A673 (cell line): ENCODE measurements at regions of chr3 and their contacts with region 1.

Region 1: GRCh38 chr3:67113802-67114407 is 115.8 kb downstream of the KBTBD8 start:
- DNase-seq: peak; percentile 68
- H3K4me3 ChIP-seq: no peak overlapping the region
- H3K27ac ChIP-seq: no peak overlapping the region
- H3K4me1 ChIP-seq: no peaks in the 10 kb centered on the region
- H3K27me3 ChIP-seq: no peaks in the 10 kb centered on the region
- CTCF ChIP-seq: peak; percentile 70

Region 2: DNA sequence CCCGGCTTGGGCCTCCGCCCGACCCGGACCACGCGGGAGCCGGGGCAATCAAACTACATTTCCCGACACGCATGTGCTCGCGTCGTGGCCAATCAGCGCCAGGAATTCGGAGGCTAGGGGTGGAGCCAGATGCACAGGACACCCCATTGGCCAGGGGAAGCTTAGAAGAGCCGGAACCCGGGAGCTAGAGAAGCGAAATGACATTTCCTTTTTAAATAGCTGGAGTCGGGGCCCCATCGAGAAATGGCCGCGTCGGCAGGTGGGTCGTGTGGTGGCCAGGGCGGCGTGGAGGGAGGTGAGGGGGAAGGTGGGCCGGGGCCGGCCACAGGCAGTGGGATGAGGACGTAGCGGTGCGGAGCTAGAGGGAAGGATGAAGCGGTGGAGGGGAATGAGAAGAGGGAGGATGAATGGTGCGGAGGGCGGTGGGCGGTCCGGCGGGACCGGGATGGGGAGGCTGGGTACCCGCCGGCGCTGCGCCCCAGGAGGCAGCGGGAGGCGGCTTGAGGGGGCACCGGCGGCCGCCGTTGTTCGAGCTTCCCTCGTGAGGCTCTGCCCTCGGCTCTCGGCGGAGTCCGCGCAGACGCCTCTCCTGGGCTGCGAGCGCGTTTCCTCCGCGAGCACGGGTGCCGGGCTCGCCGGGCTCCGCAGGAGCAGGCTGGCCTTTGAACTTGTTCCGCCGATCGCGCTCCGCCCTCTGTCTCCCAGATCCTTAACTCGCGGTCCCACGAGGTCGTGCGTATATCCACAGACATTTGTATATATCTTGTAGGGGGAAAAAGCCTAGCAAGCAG is 115.6 kb before region 1 on chr3 and contains the start of gene KBTBD8:
- CTCF ChIA-PET with region 1: no interaction called
- POLR2A ChIA-PET with region 1: no interaction called
- intact Hi-C with region 1: no loop called
- DNase-seq: peak; percentile 97
- H3K4me3 ChIP-seq: peak within 1 kb of the TSS; percentile 61
- H3K27ac ChIP-seq: no peak within 1 kb of the TSS
- H3K4me1 ChIP-seq: no peaks in the 10 kb centered on the region
- H3K27me3 ChIP-seq: peaks cover 7% of the 10 kb centered on the region
- CTCF ChIP-seq: no peak
- total RNA-seq, gene KBTBD8: 1.7 and 2.0 TPM in 2 replicates

Region 3: DNA sequence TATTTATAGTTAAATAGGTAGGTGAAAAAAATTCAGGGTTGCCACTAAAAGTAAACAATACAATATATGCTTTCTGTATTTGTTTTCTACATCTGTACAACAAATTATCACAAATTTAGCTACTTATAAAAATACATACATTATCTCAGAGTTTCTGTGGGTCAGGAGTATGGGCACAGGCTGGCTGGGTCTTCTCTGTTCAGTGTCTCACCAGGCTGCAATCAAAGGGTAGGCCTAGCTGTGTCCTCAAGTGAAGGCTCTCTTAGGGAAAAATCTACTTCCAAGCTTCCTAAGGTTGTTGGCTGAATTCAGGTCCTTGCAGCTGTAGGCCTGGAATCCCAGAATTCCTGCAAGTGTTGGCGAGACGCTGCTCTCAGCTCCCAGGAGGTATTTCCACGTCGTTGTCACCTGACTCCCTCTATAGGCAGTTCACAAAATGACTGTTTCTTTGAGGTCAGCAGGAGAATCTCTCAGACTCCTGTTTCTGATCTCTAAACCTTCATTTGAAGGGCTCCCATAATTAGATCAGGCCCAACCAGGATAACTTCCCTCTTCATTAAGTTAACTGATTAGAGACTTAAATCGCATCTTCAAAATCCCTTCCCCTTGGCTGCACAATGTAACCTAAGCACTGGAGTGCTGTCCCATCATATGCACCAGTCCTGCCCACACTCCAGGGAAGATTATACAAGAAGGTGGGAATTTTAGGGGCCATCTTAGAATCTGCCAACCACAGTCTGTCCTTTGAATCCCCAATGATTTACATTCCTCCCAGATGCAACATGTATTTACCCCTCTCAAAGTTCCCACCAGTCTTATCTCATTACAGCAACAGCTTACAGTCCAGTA is 243.9 kb after region 1 on chr3:
- CTCF ChIA-PET with region 1: interaction called, 3 read pairs
- POLR2A ChIA-PET with region 1: no interaction called
- intact Hi-C with region 1: loop called (anchors 10 kb)
- DNase-seq: peak; percentile 26
- H3K4me3 ChIP-seq: no peak overlapping the region
- H3K27ac ChIP-seq: no peak overlapping the region
- H3K4me1 ChIP-seq: no peaks in the 10 kb centered on the region
- H3K27me3 ChIP-seq: no peaks in the 10 kb centered on the region
- CTCF ChIP-seq: peak; percentile 45

Region 4: DNA sequence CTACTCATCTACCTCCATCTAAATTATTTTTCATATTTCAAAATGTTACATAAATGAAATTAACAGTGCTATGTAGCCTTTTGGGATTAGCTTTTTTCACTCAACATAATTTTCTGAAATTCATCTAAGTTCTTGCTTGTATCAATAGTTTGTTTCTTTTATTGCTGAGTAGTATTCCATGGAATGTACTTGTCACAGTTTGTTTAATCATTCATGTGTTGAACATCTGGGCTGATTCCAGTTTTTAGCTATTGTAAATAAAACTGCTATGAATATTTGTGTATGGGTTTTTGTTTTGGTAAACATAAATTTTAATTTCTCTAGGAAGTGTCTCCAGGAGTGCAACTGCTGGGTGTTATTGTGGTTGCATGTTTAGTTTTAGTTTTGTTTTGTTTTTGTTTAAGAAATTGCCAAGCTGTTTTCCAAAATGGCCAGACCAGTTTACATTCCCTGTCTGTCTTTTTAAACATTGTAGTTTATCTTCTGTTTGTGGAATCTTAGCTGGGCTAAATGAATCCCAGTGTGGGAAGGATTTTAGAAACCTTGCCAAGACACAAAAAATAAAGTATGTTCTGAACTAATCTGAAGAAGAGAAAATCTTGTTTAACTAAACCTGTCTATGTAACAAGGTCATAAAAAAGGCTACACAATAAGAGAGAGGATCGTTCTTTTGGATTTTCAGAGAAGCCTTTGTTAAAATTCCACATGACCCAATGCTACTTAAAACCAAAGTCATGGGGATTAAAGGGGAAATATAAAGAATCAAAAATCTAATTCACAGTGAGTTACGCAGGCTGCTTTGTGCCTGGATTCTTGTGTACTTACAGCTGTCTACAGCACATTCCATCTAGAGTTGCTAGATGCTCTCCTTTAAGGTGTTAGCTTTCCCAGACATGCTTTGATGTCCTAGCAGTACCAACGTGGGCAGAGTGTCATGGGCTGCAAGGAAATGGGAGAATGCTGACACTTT is 669.7 kb after region 1 on chr3:
- CTCF ChIA-PET with region 1: no interaction called
- POLR2A ChIA-PET with region 1: no interaction called
- intact Hi-C with region 1: loop called (anchors 10 kb)
- DNase-seq: no peak
- H3K4me3 ChIP-seq: no peak overlapping the region
- H3K27ac ChIP-seq: no peak overlapping the region
- H3K4me1 ChIP-seq: no peaks in the 10 kb centered on the region
- H3K27me3 ChIP-seq: no peaks in the 10 kb centered on the region
- CTCF ChIP-seq: no peak